ENCODE measurements at regions of chr5 and their contacts with region 1.

Region 1: GRCh38 chr5:177362610-177363507 is 5.1 kb downstream of the RGS14 start:
- DNase-seq: peak in 2 of 3 donors; percentile 61 to 70
- H3K4me3 ChIP-seq: peak overlapping the region in 6 of 7 experiments; percentile 2 to 74 (median 42)
- H3K27ac ChIP-seq: peak overlapping the region in 1 of 2 experiments; percentile 58
- H3K4me1 ChIP-seq: peaks cover 0 to 71% (median 60%) of the 10 kb centered on the region in 4 experiments
- H3K27me3 ChIP-seq: no peaks in the 10 kb centered on the region

Region 2: GRCh38 chr5:177271113-177271512 is 91.7 kb before region 1 on chr5:
- CTCF ChIA-PET with region 1: no interaction called
- POLR2A ChIA-PET with region 1: no interaction called
- DNase-seq: no peak
- H3K4me3 ChIP-seq: no peak overlapping the region
- H3K27ac ChIP-seq: no peak overlapping the region
- H3K4me1 ChIP-seq: no peaks in the 10 kb centered on the region
- H3K27me3 ChIP-seq: no peaks in the 10 kb centered on the region

Region 3: GRCh38 chr5:177336112-177336511 is 26.7 kb before region 1 on chr5:
- CTCF ChIA-PET with region 1: interaction called, 11 read pairs
- POLR2A ChIA-PET with region 1: no interaction called
- DNase-seq: peak; percentile 83 to 90 (median 89)
- H3K4me3 ChIP-seq: no peak overlapping the region
- H3K27ac ChIP-seq: no peak overlapping the region
- H3K4me1 ChIP-seq: peaks cover 6 to 27% (median 24%) of the 10 kb centered on the region in 4 experiments
- H3K27me3 ChIP-seq: no peaks in the 10 kb centered on the region

Region 4: DNA sequence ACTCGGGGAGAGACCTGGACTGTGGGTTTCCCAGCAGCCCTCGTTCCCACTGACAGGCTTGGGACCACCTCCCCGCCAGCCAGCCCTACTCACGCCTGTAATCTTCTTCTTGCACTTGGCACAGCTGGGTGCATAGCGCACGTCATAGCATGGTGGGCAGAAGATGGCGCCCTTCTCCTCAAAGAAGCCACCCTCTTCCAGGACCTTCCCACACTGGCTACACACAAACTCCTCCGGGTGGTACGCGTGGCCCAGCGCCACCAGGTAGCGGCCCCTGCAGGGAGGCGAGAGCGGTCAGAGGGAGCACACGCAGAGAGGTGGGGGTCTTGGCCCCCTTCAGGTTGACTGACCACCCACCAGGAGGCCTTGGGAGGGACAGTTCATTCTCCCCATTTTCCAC is 125.1 kb after region 1 on chr5:
- CTCF ChIA-PET with region 1: no interaction called
- POLR2A ChIA-PET with region 1: no interaction called
- DNase-seq: peak in 2 of 3 donors; percentile 46 to 49
- H3K4me3 ChIP-seq: no peak overlapping the region
- H3K27ac ChIP-seq: no peak overlapping the region
- H3K4me1 ChIP-seq: peaks cover 0 to under 1% (median 0%) of the 10 kb centered on the region in 4 experiments
- H3K27me3 ChIP-seq: no peaks in the 10 kb centered on the region